Activated CD4-positive, alpha-beta T cell treated with anti-CD3 and anti-CD28 coated beads, Interleukin-2, amount 10 ng/mL, durations not matched to agents 24 days and 14 days (primary cell): ENCODE measurements at regions of chr7 and their contacts with region 1.

Region 1: GRCh38 chr7:30322271-30323005 is 38.0 kb downstream of the ZNRF2 start:
- DNase-seq: peak; percentile 79
- H3K4me3 Mint-ChIP-seq: peak overlapping the region; percentile 78
- H3K27ac Mint-ChIP-seq: peak overlapping the region; percentile 96
- H3K4me1 Mint-ChIP-seq: peaks cover 42% of the 10 kb centered on the region
- H3K27me3 Mint-ChIP-seq: no peaks in the 10 kb centered on the region

Region 2: DNA sequence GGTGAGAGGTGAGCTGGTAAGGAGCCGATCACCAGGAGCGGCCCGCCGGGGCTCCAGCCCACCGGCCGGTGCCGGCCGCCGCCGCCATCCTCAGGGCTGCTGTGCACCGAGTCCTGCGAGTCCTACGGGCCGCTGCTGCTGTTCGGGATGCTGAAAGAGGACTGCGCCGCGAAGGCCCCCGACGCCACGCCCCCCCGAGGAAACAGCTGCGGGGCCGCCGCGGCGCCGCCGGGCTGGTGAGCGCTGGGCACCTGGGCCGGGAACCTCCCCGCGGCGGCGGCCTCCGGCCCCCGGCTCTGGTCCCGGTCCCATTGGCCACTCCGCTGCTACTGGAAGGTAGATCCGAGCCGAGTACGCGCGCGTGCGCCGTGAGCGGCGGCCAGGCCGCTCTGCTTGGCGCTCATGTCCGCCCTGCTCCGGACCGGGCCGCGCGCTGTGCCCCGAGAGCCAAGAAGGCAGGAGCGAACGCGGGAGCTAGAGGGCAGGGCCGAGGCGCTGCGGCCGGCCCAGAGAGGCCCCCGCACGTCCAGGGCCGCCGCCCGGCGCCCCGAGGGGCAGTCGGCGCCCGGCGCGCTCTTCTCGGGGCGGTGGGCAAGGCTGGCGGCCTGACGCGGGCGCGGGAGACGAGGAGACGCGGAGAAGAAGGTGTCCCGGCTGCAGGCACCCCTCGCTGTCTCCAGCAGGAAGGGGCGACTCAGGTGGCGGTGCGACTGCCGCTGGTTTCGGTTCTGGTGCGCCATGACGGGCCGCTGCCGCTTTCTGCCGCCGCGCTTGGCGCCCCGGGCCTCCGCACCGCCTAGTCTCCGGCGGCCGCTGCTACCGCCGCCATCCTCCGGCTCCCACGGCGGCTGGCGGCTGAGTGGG is 637.4 kb before region 1 on chr7:
- intact Hi-C with region 1: no loop called
- DNase-seq: peak; percentile 86
- H3K4me3 Mint-ChIP-seq: peak overlapping the region; percentile 87
- H3K27ac Mint-ChIP-seq: no peak overlapping the region
- H3K4me1 Mint-ChIP-seq: peaks cover 2% of the 10 kb centered on the region
- H3K27me3 Mint-ChIP-seq: peaks cover 28% of the 10 kb centered on the region

Region 3: DNA sequence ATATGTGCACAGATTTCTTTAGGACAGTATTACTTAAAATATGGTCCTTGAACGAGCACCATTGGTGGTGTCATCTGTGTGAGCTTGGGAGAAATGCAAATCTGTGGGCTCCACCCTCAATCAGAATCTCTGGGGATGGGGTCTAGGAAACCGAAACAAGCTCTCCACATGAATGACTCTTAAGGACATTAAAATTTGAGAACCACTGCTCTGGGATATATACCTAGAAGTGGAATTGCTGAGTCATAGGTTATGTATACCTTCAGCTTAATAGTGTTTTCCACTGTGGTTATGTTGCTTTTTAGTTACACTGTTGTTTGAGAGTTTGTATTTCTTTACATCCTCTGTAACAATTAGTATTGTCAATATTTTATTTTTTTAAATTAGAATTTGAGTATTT is 14.0 kb before region 1 on chr7:
- intact Hi-C with region 1: loop called (anchors 1 kb)
- DNase-seq: no peak
- H3K4me3 Mint-ChIP-seq: no peak overlapping the region
- H3K27ac Mint-ChIP-seq: peak overlapping the region; percentile 37
- H3K4me1 Mint-ChIP-seq: peaks cover 30% of the 10 kb centered on the region
- H3K27me3 Mint-ChIP-seq: no peaks in the 10 kb centered on the region